ENCODE measurements at regions of chr9 and their contacts with region 1.

Region 1: DNA sequence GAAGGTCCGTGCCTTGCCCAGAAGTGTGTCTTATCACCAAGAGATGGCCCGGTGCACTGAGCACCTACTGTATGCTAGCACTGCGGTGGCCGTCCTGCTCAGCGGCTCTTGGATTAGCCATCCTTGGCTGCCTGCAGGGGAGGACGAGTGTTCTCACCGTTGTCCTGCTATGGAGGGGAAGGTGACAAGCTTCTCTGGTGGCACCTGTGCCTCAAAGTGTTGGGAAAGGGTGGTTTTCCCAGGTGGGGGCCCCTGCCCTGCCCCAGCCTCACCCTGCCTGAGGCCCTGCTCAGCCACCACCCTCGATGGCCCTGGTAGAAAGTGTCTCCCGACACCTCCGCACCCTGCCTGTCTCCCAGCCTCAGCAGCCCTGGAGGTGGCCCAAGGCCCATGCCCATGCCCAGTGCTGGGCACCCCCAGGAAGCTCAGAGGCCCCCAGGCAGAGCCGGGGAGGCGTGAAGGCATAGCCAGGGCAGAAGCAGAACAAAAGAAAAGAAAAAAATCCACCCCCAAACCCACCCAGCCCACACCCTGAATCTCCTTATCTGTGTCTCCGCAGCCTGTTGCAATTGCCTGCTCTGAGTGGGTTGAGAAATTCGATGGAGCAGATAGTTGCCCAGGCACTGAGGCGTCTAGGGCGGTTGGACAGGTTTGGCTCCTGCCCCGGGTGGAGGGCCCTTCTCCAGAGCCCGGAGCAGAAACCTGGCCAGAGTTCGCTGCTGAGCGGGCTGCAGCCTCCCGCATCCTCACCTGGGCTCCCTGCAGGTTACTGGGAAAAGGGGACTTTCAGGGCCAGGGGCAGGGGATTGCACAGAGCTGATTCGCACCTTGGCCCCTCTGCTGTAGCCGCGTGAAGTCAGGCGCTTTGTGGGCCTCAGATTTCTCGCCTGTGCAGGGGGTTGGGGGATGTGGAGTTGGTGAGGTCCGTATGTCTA is 30.6 kb downstream of the RXRA start:
- DNase-seq: peak; percentile 93 to 95
- H3K4me3 ChIP-seq: peak overlapping the region; percentile 63
- H3K27ac ChIP-seq: peak overlapping the region; percentile 87
- H3K4me1 ChIP-seq: peaks cover 94% of the 10 kb centered on the region
- H3K27me3 ChIP-seq: no peaks in the 10 kb centered on the region
- CTCF ChIP-seq: no peak

Region 2: DNA sequence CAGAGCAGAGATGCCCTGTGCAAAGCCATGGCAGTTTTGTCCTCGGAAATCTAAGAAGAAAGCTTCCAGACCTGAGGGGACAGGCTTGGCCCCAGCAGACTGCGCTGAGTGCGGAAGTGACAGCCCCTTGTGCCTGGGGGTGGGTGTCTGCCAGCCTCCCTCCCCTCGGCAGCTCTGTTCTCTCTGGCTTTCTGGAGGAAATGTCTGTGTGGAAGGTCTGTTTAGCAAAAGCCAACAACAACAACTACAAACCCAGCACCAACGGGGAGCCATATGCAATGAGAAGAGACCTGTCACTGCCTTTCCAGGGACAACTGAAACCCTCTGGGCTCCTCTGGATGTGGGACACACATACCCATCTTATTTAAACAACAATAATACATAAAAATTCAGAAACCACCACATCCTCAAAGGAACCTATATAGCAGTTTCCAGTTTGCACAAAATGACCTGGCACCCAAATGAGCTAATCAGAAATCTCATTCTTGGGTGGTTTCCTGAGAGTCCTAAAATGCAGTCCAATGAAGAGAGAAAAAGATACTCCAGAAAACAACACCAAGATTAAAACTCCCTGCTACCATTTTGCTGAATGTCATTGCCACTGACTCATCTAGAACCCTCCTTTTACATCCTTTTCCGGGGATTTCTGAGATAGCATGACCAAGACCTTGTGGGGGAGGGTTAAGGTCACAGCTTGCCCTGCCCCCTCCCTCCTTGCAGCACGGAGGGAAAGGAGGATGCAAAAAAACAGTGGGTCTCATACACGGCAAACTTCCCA is 1576.4 kb before region 1 on chr9:
- CTCF ChIA-PET with region 1: no interaction called
- POLR2A ChIA-PET with region 1: no interaction called
- intact Hi-C with region 1: no loop called
- DNase-seq: no peak
- H3K4me3 ChIP-seq: no peak overlapping the region
- H3K27ac ChIP-seq: no peak overlapping the region
- H3K4me1 ChIP-seq: no peaks in the 10 kb centered on the region
- H3K27me3 ChIP-seq: peaks cover 5% of the 10 kb centered on the region
- CTCF ChIP-seq: no peak

Region 3: GRCh38 chr9:134163353-134164196 is 193.3 kb before region 1 on chr9:
- CTCF ChIA-PET with region 1: no interaction called
- POLR2A ChIA-PET with region 1: no interaction called
- intact Hi-C with region 1: loop called (anchors 2 kb)
- DNase-seq: peak; percentile 50 to 67
- H3K4me3 ChIP-seq: no peak overlapping the region
- H3K27ac ChIP-seq: no peak overlapping the region
- H3K4me1 ChIP-seq: peaks cover 6% of the 10 kb centered on the region
- H3K27me3 ChIP-seq: no peaks in the 10 kb centered on the region
- CTCF ChIP-seq: peak; percentile 34; the same call in 1 of the 2 replicates

Region 4: GRCh38 chr9:134341306-134341705 is 15.5 kb before region 1 on chr9:
- CTCF ChIA-PET with region 1: no interaction called
- POLR2A ChIA-PET with region 1: no interaction called
- intact Hi-C with region 1: loop called (anchors 1 kb)
- DNase-seq: peak in 1 of 2 experiments; percentile 73
- H3K4me3 ChIP-seq: no peak overlapping the region
- H3K27ac ChIP-seq: no peak overlapping the region
- H3K4me1 ChIP-seq: no peaks in the 10 kb centered on the region
- H3K27me3 ChIP-seq: no peaks in the 10 kb centered on the region
- CTCF ChIP-seq: no peak

Region 5: DNA sequence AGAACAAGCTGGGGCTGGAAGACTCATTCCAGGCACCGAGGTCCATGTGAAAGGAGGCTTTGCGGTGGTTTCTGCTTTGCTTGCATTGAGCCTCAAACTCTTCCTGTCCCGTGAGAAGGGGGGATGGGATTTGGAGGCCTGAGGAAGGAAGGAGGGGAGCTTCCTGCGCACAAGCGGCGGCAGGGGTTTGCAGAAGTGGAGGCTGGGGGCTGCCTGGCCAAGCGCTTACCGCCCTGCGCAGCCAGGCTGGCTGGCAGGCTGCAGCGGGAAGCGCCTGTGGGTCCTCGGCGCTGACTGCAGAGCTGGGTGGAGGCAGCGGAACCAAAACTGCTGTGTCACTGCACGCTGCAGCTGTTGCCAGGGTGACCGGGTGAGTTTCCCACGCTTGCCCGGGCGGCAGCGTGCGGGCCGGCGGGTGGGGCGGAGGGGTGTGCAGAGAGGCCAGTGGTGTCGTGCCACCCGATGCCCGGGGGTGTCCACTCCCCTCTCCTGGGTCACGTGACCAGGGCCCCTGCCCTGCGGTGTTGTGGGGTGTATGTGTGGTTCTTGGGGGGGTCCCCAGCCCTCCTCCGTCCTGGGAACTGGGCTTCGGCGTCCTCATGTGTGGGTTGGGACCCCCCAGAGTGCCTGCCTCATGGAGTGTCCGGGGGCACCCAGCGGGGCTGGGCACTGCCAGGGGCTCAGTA is 50.4 kb after region 1 on chr9:
- CTCF ChIA-PET with region 1: no interaction called
- POLR2A ChIA-PET with region 1: interaction called, 7 read pairs
- intact Hi-C with region 1: loop called (anchors 1 kb)
- DNase-seq: peak; percentile 89 to 98
- H3K4me3 ChIP-seq: peak overlapping the region; percentile 47
- H3K27ac ChIP-seq: peak overlapping the region; percentile 97
- H3K4me1 ChIP-seq: peaks cover 79% of the 10 kb centered on the region
- H3K27me3 ChIP-seq: no peaks in the 10 kb centered on the region
- CTCF ChIP-seq: no peak

Region 6: DNA sequence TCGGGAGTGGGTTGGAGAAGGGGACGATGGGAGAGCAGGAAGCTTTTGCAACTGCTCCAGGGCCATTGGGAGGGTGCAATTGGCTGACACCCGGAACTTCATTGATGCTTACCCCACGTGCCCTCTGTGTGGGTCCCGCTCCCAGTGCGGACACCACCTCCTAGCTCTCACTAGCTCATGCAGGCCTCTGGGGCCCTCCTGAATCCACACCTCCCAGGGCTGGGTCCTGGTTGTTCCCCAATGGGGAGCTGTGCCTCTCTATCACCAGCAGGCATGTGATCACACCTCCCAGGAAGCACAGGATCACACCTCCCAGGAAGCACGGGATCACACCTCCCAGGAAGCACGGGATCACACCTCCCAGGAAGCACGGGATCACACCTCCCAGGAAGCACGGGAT is 491.7 kb after region 1 on chr9:
- CTCF ChIA-PET with region 1: interaction called, 12 read pairs
- POLR2A ChIA-PET with region 1: no interaction called
- intact Hi-C with region 1: no loop called
- DNase-seq: no peak
- H3K4me3 ChIP-seq: no peak overlapping the region
- H3K27ac ChIP-seq: no peak overlapping the region
- H3K4me1 ChIP-seq: no peaks in the 10 kb centered on the region
- H3K27me3 ChIP-seq: peaks cover 24% of the 10 kb centered on the region
- CTCF ChIP-seq: no peak